Activated naive CD8-positive, alpha-beta T cell treated with anti-CD3 and anti-CD28 coated beads, Interleukin-2, amount 10 ng/mL, durations not matched to agents 7 days and 5 days (primary cell): ENCODE measurements at regions of chr2 and their contacts with region 1.

Region 1: DNA sequence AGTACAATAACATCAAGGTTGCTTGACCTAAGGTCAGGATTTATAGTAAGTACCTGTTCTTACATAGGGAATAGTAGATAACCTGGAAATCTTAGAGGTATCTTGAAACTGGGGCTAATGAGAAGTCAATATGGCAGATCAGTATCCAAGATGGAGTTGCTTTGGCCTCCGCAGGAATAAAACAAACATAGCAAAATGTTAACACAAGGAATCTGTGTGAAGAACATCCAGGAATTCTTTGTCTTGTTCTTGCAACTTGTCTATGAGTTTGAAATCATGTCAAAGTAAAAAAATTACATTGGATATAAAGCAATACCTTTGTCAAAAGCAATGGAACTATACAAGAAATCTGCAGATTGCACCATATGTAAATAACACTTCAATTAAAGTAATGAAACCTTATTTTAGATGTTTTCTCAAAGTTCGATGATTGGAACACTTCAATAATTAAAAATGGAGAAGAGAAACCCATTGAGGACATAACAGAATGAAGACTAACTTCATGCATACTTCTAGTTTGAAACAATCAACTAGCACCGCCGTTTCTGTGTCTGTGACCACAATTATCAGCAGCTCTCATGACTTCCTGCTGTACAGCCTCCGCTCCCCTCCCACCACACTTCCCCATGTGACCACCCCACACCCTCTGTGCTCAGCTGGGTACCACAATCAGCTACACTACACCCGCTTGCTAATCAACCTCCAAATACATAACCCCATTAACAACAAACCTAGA is 27.6 kb downstream of the C2orf76 start:
- DNase-seq: peak; percentile 52
- ATAC-seq: peak; percentile 100
- H3K4me3 Mint-ChIP-seq: peak overlapping the region; percentile 69
- H3K27ac Mint-ChIP-seq: peak overlapping the region; percentile 65
- H3K4me1 Mint-ChIP-seq: peaks cover 21% of the 10 kb centered on the region
- H3K27me3 Mint-ChIP-seq: no peaks in the 10 kb centered on the region

Region 2: DNA sequence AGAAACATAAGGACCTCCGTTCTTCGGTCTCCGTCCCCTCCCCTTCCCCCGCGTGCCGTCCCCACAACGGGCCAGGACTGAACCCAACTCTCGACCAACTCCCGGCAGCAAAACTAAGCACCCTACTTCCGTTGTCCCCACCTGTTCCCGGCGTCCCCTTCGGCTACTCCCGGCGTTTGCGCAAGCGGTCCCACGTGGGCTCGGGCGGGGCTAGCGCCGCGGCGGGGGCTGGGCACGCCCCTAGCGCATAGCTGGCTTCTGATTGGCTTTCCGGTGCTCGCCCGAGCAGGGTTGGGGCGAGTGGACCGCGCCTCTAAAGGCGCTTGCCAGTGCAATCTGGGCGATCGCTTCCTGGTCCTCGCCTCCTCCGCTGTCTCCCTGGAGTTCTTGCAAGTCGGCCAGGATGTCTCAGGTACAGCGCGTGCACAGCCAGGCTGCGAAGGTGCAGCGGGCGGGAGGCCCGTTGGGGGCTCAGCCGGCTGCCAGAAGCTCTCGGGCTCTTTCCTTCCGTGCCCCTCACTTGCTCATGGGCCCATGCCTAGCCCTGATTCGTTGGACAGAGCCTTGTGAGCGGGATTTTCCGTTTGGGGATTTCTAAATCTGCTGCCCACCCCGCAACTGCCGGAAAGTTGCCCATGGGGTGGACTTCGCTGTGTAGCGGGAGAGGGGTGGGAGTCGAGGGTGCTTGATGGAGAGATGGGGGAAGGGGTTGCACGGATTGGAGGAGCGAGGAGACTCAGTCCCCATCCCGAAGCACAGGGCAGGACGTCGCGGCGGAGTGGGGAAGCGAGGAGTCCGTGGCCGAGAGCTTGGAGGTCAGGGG is 27.9 kb after region 1 on chr2 and contains the starts of genes C2orf76 and DBI:
- POLR2A ChIA-PET with region 1: interaction called, 25 read pairs
- DNase-seq: peak; percentile 94
- ATAC-seq: peak; percentile 91
- H3K4me3 Mint-ChIP-seq: peak within 1 kb of the TSS; percentile 100
- H3K27ac Mint-ChIP-seq: peak within 1 kb of the TSS; percentile 96
- H3K4me1 Mint-ChIP-seq: peaks cover 23% of the 10 kb centered on the region
- H3K27me3 Mint-ChIP-seq: no peaks in the 10 kb centered on the region
- total RNA-seq, gene C2orf76: 6.4 to 7.5 TPM
- total RNA-seq, gene DBI: 141 to 147 TPM